AG04449 (cell line): ENCODE measurements at regions of chr9 and their contacts with region 1.

Region 1: GRCh38 chr9:16257604-16258003 is 612.9 kb downstream of the BNC2 start:
- DNase-seq: no peak
- H3K4me3 ChIP-seq: no peak overlapping the region
- CTCF ChIP-seq: peak; percentile 48

Region 2: DNA sequence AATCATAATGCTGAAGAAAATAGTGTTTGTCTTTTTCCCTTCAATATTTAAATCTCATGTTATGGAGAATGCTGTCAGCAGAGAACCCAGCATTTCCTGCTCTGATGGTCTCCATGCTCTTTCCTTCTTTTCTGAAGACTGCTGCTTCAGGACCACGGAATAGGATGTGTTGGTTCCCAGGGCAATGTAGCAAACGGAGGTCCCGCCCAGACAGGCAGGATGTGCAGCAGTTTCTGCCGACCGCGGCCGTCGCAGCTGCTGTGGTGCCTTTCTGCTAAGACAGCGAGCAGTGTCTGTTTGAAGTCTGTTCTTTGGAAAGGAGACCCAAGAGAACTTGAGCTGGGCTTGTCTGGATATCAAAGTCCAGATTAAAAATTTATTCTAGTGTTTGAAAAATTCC is 50.4 kb before region 1 on chr9:
- CTCF ChIA-PET with region 1: no interaction called
- POLR2A ChIA-PET with region 1: no interaction called
- DNase-seq: no peak
- H3K4me3 ChIP-seq: no peak overlapping the region
- CTCF ChIP-seq: no peak

Region 3: DNA sequence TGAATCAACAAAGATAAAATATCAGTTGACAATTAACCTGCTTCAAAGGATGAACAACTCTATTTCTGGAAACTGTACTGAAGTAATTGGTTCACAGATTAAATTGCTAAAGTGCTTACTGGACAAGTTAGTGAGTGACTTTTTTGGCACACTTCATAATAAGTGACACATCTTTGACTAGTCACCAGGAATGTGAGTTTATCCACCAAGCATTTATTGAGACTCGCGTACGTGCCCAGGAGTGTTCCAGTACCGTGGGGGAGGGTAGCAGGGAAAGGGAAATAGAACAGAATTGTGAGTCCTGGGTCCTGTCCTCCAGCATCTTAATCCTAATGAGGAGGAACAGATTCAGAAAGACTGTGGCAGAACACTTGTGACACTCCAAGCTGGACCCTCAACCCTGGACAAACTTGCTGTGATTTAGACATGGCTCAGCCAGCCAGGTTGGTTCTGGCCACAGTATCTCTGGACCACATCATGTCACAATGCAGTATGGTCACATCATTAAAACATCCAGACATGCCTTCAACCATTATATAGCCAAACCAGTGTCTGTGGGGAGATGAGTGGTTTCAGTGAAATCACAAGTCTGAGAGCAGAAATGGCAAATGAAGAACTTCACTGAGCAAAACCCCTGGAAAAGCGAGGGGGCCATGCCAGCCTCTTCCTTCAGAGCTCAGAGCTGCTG is 10.3 kb before region 1 on chr9:
- CTCF ChIA-PET with region 1: interaction called, 37 read pairs
- POLR2A ChIA-PET with region 1: no interaction called
- DNase-seq: no peak
- H3K4me3 ChIP-seq: no peak overlapping the region
- CTCF ChIP-seq: no peak

Region 4: GRCh38 chr9:16450578-16450977 is 193.0 kb after region 1 on chr9:
- CTCF ChIA-PET with region 1: no interaction called
- POLR2A ChIA-PET with region 1: no interaction called
- DNase-seq: no peak
- H3K4me3 ChIP-seq: no peak overlapping the region
- CTCF ChIP-seq: no peak